Activated CD4-positive, alpha-beta memory T cell treated with anti-CD3 and anti-CD28 coated beads for 36 hours (primary cell): ENCODE measurements at regions of chr9 and their contacts with region 1.

Region 1: DNA sequence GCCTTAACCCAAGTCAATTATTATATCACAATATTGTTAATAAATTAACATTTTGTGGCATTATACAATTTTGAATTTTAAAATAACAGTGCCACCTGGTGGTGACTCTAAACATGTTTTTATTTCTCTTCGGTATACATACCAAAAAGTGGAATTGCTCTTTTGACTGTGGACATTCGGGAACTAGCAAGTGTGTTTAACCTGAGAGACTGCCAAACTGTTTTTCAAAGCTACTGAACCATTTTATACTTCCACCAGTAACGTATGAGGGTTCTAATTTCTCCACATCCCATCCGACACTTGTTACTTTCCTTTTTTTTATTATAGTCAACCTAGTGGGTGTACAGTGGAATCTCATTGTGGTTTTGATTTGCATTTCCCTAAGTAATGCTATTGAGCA is 18.3 kb upstream of the HSDL2 start:
- DNase-seq: no peak
- H3K4me3 Mint-ChIP-seq: no peak overlapping the region
- H3K27ac Mint-ChIP-seq: no peak overlapping the region
- H3K4me1 Mint-ChIP-seq: peaks cover 10% of the 10 kb centered on the region
- H3K27me3 Mint-ChIP-seq: peaks cover 7% of the 10 kb centered on the region

Region 2: DNA sequence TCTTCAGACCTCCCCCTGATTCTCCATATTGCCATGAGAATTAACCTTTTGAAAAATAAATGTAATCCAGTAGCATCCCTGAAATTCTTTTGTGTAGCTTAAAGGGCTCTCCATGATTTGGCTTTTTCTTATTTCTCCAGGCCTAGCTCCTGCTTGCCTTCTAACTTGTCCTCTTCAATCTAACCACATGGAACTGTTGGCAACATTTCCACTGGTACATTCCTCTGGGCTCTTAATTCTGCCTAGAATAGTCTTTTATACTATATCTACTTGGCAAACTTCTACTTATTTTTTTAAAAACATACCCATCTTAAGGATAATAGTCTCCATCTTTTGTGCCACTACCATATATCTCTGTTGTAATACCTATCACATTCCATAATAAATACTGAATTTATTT is 646.1 kb before region 1 on chr9:
- CTCF ChIA-PET with region 1: no interaction called
- POLR2A ChIA-PET with region 1: no interaction called
- intact Hi-C with region 1: no loop called
- DNase-seq: no peak
- H3K4me3 Mint-ChIP-seq: no peak overlapping the region
- H3K27ac Mint-ChIP-seq: no peak overlapping the region
- H3K4me1 Mint-ChIP-seq: peaks cover 2% of the 10 kb centered on the region
- H3K27me3 Mint-ChIP-seq: no peaks in the 10 kb centered on the region

Region 3: GRCh38 chr9:111759762-111760639 is 601.6 kb before region 1 on chr9:
- CTCF ChIA-PET with region 1: interaction called, 8 read pairs
- POLR2A ChIA-PET with region 1: no interaction called
- intact Hi-C with region 1: loop called (anchors 1 kb)
- DNase-seq: peak; percentile 22
- H3K4me3 Mint-ChIP-seq: no peak overlapping the region
- H3K27ac Mint-ChIP-seq: no peak overlapping the region
- H3K4me1 Mint-ChIP-seq: peaks cover 2% of the 10 kb centered on the region
- H3K27me3 Mint-ChIP-seq: no peaks in the 10 kb centered on the region

Region 4: GRCh38 chr9:112086627-112087026 is 275.0 kb before region 1 on chr9:
- CTCF ChIA-PET with region 1: interaction called, 42 read pairs
- POLR2A ChIA-PET with region 1: no interaction called
- intact Hi-C with region 1: no loop called
- DNase-seq: no peak
- H3K4me3 Mint-ChIP-seq: no peak overlapping the region
- H3K27ac Mint-ChIP-seq: no peak overlapping the region
- H3K4me1 Mint-ChIP-seq: no peaks in the 10 kb centered on the region
- H3K27me3 Mint-ChIP-seq: no peaks in the 10 kb centered on the region

Region 5: DNA sequence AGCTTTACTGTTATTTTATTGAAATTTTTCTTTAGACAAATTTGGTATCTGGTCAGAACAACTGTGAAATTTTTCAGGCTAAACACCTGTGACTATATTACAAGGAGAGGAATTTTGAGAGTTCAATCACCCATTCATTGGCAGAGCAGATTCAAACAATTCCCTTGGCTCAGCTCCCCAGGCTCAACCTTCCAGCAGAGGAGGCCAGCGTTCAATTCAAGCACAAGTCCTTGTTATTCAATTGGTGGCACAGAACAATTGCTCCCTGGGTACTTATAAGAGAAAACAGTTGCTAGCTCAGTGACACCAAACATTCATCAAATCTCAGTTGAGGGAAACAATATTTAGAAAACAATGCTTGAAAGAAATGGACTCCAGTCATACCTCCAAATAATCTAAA is 269.8 kb before region 1 on chr9:
- CTCF ChIA-PET with region 1: interaction called, 118 read pairs
- POLR2A ChIA-PET with region 1: no interaction called
- intact Hi-C with region 1: loop called (anchors 1 kb)
- DNase-seq: peak; percentile 25
- H3K4me3 Mint-ChIP-seq: no peak overlapping the region
- H3K27ac Mint-ChIP-seq: no peak overlapping the region
- H3K4me1 Mint-ChIP-seq: peaks cover 22% of the 10 kb centered on the region
- H3K27me3 Mint-ChIP-seq: no peaks in the 10 kb centered on the region

Region 6: GRCh38 chr9:112097712-112098688 is 263.6 kb before region 1 on chr9:
- CTCF ChIA-PET with region 1: interaction called, 118 read pairs
- POLR2A ChIA-PET with region 1: no interaction called
- intact Hi-C with region 1: loop called (anchors 1 kb)
- DNase-seq: peak; percentile 74
- H3K4me3 Mint-ChIP-seq: no peak overlapping the region
- H3K27ac Mint-ChIP-seq: no peak overlapping the region
- H3K4me1 Mint-ChIP-seq: peaks cover 22% of the 10 kb centered on the region
- H3K27me3 Mint-ChIP-seq: no peaks in the 10 kb centered on the region

Region 7: GRCh38 chr9:112104901-112105300 is 256.7 kb before region 1 on chr9:
- CTCF ChIA-PET with region 1: interaction called, 118 read pairs
- POLR2A ChIA-PET with region 1: no interaction called
- intact Hi-C with region 1: loop called (anchors 5 kb)
- DNase-seq: no peak
- H3K4me3 Mint-ChIP-seq: no peak overlapping the region
- H3K27ac Mint-ChIP-seq: no peak overlapping the region
- H3K4me1 Mint-ChIP-seq: no peaks in the 10 kb centered on the region
- H3K27me3 Mint-ChIP-seq: no peaks in the 10 kb centered on the region

Region 8: DNA sequence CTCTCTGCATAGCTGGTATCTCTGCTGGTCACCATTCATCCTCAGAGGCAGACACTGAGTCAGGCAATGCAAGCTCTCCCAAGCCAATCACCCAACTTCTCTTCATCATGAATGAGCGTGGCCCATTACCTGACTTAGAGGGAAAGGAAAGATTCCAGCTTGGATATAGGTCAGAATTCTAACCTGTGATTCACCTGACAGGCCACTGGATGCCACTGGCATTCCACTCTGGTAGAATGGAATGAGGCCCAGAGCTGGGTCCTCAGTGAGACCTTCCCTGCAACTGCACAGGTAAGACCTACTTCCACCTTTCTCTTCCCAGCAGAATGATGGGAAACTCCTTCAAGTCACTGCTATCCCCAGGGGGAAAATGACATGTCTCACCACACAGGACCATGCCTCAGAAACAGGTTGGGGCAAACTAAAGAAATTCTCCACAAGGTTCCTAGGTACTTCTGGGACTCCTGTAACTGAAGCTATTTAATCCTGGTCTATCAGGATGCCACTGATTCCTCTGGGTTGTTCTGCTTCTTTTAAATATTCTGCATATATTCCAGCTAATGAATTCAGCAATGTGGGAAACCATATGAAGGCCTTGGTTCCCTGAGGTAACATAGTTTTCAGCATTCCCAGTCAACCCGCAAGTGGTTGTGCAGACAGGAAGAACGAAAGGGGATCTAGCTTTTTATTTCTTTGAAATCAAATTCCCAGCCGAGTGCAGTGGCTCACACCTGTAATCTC is 248.5 kb before region 1 on chr9:
- CTCF ChIA-PET with region 1: interaction called, 59 read pairs
- POLR2A ChIA-PET with region 1: no interaction called
- intact Hi-C with region 1: loop called (anchors 5 kb)
- DNase-seq: peak; percentile 25
- H3K4me3 Mint-ChIP-seq: no peak overlapping the region
- H3K27ac Mint-ChIP-seq: no peak overlapping the region
- H3K4me1 Mint-ChIP-seq: no peaks in the 10 kb centered on the region
- H3K27me3 Mint-ChIP-seq: no peaks in the 10 kb centered on the region